IMR-90 (cell line): ENCODE measurements at regions of chr6 and their contacts with region 1.

Region 1: DNA sequence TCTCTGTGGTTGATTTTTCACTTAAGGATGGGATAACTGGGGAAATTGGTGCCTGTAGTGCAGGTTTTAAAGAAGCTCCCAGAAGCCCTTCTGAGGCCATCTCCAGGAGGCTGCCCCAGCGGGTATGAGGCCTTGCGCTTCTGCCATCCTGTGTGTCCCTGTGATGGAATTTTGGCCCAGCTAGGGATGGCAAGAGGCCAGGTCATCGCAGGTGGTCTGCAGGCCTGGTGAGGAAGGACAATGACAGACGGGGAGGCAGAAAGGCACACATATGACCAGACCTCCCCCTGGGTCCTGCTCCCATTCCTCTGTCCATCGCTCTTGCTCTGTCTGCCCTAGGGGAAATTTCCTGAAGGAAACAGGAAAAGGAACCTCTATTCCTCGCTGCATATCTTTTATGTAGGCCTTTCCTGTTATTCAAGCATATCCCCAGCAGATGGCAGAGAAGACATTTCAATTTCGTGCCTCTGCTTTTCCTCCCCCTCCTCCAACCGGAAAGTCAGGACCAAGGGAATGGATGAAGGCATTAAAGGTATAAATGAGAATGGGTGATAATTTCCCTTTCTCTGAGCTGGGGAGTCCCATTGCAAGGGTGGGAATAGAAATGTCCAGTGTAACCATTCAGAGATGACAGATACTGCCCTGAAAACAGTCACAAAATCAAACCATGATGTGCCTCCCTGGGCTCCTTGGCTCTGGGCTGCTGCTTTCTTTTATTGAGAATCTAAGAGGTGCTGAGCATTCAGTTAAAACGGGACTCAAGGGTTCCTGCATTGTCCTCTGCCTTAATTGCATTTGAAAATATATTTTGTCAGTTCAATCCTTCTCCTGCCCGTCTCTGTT is 17.6 kb upstream of the HLA-F start:
- DNase-seq: peak; percentile 53
- ATAC-seq: peak; percentile 97
- H3K4me3 ChIP-seq: no peak overlapping the region
- H3K27ac ChIP-seq: no peak overlapping the region
- H3K4me1 ChIP-seq: no peaks in the 10 kb centered on the region
- H3K27me3 ChIP-seq: peaks cover 13% of the 10 kb centered on the region
- CTCF ChIP-seq: peak; percentile 70
- POLR2A ChIP-seq: no peak
- RAD21 ChIP-seq: peak; percentile 74

Region 2: DNA sequence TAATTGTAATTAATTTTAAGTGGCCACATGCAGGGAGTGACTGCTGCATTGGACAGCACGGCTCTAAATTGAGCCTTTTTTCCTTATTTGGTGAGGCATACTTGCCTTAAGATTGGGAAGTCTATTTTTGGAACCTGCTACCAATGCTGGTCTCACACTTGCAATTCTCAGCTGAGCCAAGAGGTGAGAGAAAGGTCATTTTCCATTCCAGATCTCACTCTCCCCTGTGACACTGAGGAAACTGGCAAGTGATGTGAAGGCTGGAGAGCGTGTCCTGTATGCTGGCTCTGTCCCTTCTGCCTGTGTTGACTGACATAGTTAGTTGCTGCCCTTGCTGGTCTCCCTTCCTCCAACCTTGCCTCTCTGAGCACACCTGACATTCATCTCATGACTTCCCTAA is 49.5 kb before region 1 on chr6:
- CTCF ChIA-PET with region 1: no interaction called
- POLR2A ChIA-PET with region 1: no interaction called
- dilution Hi-C with region 1: no loop called
- in situ Hi-C with region 1: no loop called
- intact Hi-C with region 1: no loop called
- DNase-seq: no peak
- ATAC-seq: no peak
- H3K4me3 ChIP-seq: no peak overlapping the region
- H3K27ac ChIP-seq: no peak overlapping the region
- H3K4me1 ChIP-seq: no peaks in the 10 kb centered on the region
- H3K27me3 ChIP-seq: peaks cover 18% of the 10 kb centered on the region
- CTCF ChIP-seq: no peak
- POLR2A ChIP-seq: no peak
- RAD21 ChIP-seq: no peak

Region 3: DNA sequence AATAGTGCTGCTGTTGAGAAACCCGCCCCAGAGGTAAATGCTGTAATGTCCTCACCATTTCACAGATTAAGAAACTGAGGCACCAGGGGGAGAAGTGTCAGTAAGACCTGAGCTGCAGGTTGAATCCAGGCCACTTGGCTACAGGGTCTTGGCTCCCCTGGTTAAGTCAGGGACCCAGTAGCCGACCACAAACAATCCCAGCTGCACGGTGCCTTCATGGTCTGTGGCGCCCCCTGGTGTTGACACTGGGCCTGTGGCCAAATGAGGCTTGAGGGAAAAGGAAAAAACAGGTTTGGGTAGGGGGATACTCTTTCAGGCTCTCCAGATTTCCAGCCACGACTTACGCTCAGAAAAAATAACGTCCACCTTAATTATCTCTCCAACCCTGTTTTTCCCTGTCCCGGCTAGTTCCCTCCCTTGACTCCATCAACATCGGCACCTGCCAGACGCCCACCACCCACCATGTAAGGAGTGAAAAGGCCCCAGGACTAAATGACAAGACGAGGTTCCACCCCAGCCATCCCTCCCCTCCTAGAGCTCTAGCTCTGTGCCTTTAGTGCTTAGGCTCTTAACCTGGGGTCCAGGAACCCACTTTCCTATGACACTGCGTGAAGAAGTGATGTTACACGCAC is 307.8 kb after region 1 on chr6:
- CTCF ChIA-PET with region 1: no interaction called
- POLR2A ChIA-PET with region 1: no interaction called
- dilution Hi-C with region 1: no loop called
- in situ Hi-C with region 1: no loop called
- intact Hi-C with region 1: loop called (anchors 2 kb)
- DNase-seq: no peak
- ATAC-seq: peak; percentile 64; the same call in 1 of the 2 replicates
- H3K4me3 ChIP-seq: no peak overlapping the region
- H3K27ac ChIP-seq: no peak overlapping the region
- H3K4me1 ChIP-seq: no peaks in the 10 kb centered on the region
- H3K27me3 ChIP-seq: peaks cover 4% of the 10 kb centered on the region
- CTCF ChIP-seq: peak; percentile 70
- POLR2A ChIP-seq: no peak
- RAD21 ChIP-seq: peak; percentile 83